ENCODE measurements at regions of chr15 and their contacts with region 1.

Region 1: GRCh38 chr15:41779662-41780157 is 5.4 kb downstream of the MAPKBP1 start:
- DNase-seq: no peak
- ATAC-seq: no peak; the same call in 2 of the 3 replicates
- H3K4me3 ChIP-seq: peak overlapping the region; percentile 47; the same call in 1 of the 2 replicates
- H3K27ac ChIP-seq: peak overlapping the region; percentile 7; the same call in 1 of the 2 replicates
- H3K4me1 ChIP-seq: peaks cover 17% of the 10 kb centered on the region
- H3K27me3 ChIP-seq: no peaks in the 10 kb centered on the region
- CTCF ChIP-seq: no peak
- EP300 ChIP-seq: no peak
- POLR2A ChIP-seq: no peak
- RAD21 ChIP-seq: no peak

Region 2: GRCh38 chr15:41530363-41530956 is 249.2 kb before region 1 on chr15:
- CTCF ChIA-PET with region 1: no interaction called
- POLR2A ChIA-PET with region 1: interaction called, 17 read pairs
- RAD21 ChIA-PET with region 1: no interaction called
- SMC1A ChIA-PET with region 1: no interaction called
- in situ Hi-C with region 1: no loop called
- intact Hi-C with region 1: no loop called
- DNase-seq: no peak
- ATAC-seq: no peak
- H3K4me3 ChIP-seq: no peak overlapping the region
- H3K27ac ChIP-seq: no peak overlapping the region
- H3K4me1 ChIP-seq: no peaks in the 10 kb centered on the region
- H3K27me3 ChIP-seq: no peaks in the 10 kb centered on the region
- CTCF ChIP-seq: no peak
- EP300 ChIP-seq: no peak
- POLR2A ChIP-seq: no peak
- RAD21 ChIP-seq: no peak

Region 3: DNA sequence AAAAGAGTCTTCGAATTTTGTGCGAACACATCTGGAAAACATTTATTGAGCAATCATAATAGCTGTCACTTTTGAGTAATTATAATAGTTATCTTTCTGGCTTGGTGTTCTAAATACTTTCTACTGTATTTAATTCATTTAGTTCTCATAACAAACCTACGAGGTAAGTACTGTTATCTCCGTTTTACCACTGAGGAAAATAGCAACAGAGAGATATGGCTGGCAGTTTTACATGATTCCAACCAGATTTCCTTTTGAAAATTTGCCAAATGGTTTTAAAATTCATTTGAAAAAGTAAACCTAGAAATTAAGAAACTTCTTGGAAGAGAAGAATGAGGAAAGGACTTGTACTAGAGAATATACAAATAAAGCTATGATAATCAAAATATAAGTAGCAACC is 156.8 kb before region 1 on chr15:
- CTCF ChIA-PET with region 1: no interaction called
- POLR2A ChIA-PET with region 1: no interaction called
- RAD21 ChIA-PET with region 1: no interaction called
- SMC1A ChIA-PET with region 1: no interaction called
- in situ Hi-C with region 1: no loop called
- intact Hi-C with region 1: no loop called
- DNase-seq: no peak
- ATAC-seq: no peak
- H3K4me3 ChIP-seq: no peak overlapping the region
- H3K27ac ChIP-seq: no peak overlapping the region
- H3K4me1 ChIP-seq: peaks cover 5% of the 10 kb centered on the region
- H3K27me3 ChIP-seq: no peaks in the 10 kb centered on the region
- CTCF ChIP-seq: no peak
- EP300 ChIP-seq: no peak
- POLR2A ChIP-seq: no peak
- RAD21 ChIP-seq: no peak

Region 4: DNA sequence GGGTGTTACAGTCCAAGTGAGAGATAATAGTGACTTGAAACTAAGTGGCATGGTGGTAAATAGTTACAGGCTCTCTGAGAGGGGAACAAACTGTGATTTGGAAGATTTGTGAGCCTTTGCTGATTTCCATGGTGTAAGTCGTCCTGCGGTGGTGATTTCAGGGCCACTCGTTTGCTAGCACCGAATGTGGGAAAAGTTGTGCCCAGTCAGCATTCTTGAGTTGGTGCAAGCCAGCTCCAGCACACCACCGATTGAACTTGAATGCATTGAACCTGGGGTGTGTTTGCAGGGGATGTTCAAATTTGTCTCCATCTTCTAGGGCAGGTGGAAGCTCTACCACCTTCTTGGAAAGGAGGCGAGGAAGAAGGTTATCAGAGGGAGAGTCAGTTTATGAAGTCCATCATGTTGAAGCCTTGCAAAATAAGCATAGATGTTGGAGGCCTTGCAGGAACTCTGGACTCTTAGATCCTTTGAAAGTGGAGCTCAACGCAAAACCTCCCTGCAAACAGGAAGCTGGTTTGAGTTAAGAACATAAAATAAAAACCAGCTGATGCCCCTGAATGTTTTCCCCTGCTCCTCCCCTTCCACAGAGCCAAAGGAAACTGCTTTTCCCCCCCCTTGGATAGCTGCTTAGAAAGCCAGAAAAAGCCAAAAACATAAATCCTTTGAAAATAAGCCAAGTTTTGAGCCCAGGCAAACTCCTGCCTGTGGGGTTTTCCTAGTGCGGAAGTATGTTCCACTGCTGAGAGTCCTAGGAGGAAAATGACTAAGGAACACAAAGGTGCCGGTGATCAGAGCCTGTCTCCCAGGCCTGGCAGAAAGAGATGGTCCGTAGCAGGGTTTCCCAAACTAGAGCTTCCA is 16.5 kb after region 1 on chr15:
- CTCF ChIA-PET with region 1: interaction called, 179 read pairs
- POLR2A ChIA-PET with region 1: interaction called, 170 read pairs
- RAD21 ChIA-PET with region 1: interaction called, 169 read pairs
- SMC1A ChIA-PET with region 1: interaction called, 189 read pairs
- in situ Hi-C with region 1: no loop called
- intact Hi-C with region 1: loop called (anchors 2 kb)
- DNase-seq: no peak
- ATAC-seq: no peak
- H3K4me3 ChIP-seq: no peak overlapping the region
- H3K27ac ChIP-seq: 0 out of 2 replicates have a peak overlapping the region, but pooled peaks have one; percentile 0
- H3K4me1 ChIP-seq: peaks cover 32% of the 10 kb centered on the region
- H3K27me3 ChIP-seq: no peaks in the 10 kb centered on the region
- CTCF ChIP-seq: no peak
- EP300 ChIP-seq: no peak
- POLR2A ChIP-seq: no peak
- RAD21 ChIP-seq: no peak

Region 5: GRCh38 chr15:42218953-42219592 is 439.4 kb after region 1 on chr15:
- CTCF ChIA-PET with region 1: no interaction called
- POLR2A ChIA-PET with region 1: no interaction called
- RAD21 ChIA-PET with region 1: no interaction called
- SMC1A ChIA-PET with region 1: no interaction called
- in situ Hi-C with region 1: no loop called
- intact Hi-C with region 1: no loop called
- DNase-seq: no peak
- ATAC-seq: peak; percentile 78
- H3K4me3 ChIP-seq: no peak overlapping the region
- H3K27ac ChIP-seq: no peak overlapping the region
- H3K4me1 ChIP-seq: no peaks in the 10 kb centered on the region; the same call in 1 of the 2 replicates
- H3K27me3 ChIP-seq: no peaks in the 10 kb centered on the region
- CTCF ChIP-seq: no peak
- EP300 ChIP-seq: peak in 1 of 2 experiments; percentile 73; a peak in 1 of 4 replicates
- POLR2A ChIP-seq: no peak
- RAD21 ChIP-seq: no peak